Activated T-helper 2 cell treated with anti-CD3 and anti-CD28 coated beads, Interferon-gamma antibody, Interleukin-2, Interleukin-4, amounts not matched to agents 10 μg/mL and 5 μg/mL and 100 μg/mL, durations not matched to agents 14 hours and 24 hours and 36 hours (primary cell): ENCODE measurements at regions of chr1 and their contacts with region 1.

Region 1: GRCh38 chr1:109739738-109740660 is 839 bp downstream of the GSTM3 start:
- DNase-seq: peak; percentile 79
- H3K4me3 Mint-ChIP-seq: peak overlapping the region; percentile 79
- H3K27ac Mint-ChIP-seq: peak overlapping the region; percentile 46
- H3K4me1 Mint-ChIP-seq: peaks cover 8% of the 10 kb centered on the region
- H3K27me3 Mint-ChIP-seq: peaks cover 19% of the 10 kb centered on the region

Region 2: DNA sequence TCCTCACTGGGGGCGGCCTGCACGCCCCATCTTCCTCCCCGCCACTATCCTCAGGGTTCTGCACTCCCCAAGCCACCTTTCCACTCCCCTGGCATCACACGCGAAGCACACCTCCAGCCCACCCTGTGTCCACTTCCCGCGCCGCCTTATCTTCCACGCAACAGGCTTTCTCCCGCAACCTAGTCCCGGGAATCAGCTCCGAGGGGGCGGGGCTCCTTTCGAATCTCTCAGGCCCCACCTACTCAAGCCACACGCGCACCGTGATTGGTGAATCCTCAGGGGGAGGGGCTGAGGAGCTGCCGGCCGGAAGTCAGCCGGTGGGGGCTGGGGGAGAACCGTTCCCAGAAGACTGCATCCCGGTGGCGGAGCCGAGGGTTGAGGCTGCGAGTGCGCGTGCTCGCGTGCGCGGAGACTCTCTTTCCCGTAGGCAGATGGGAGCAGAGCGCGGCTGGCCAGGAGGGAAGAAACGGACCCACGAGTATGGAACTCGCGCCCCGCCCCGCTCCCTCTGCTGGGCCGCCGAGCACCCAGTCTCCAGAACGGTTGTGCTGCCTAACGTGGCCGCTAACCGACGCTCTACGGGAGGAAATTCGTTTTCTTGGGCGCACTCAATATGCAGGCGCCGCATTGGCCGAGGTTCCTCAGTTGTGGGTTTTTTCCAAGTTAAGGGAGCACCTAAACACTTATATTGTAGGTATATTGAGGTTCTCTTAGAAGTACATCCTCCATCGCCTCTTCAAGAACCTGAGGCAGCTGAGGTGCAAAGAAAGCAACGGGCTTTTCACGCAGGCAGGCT is 456.8 kb before region 1 on chr1 and contains the start of gene PSRC1:
- intact Hi-C with region 1: no loop called
- DNase-seq: peak; percentile 87
- H3K4me3 Mint-ChIP-seq: peak within 1 kb of the TSS; percentile 93
- H3K27ac Mint-ChIP-seq: peak within 1 kb of the TSS; percentile 79
- H3K4me1 Mint-ChIP-seq: peaks cover 21% of the 10 kb centered on the region
- H3K27me3 Mint-ChIP-seq: peaks cover 3% of the 10 kb centered on the region
- total RNA-seq, gene PSRC1: 7.8 and 9.5 TPM in 2 replicates

Region 3: GRCh38 chr1:109687616-109688499 is 52.1 kb before region 1 on chr1 and contains the start of gene GSTM1:
- intact Hi-C with region 1: loop called (anchors 2 kb)
- DNase-seq: peak; percentile 85
- H3K4me3 Mint-ChIP-seq: peak within 1 kb of the TSS; percentile 86
- H3K27ac Mint-ChIP-seq: peak within 1 kb of the TSS; percentile 94
- H3K4me1 Mint-ChIP-seq: peaks cover 11% of the 10 kb centered on the region
- H3K27me3 Mint-ChIP-seq: no peaks in the 10 kb centered on the region
- total RNA-seq, gene GSTM1: 112 and 113 TPM in 2 replicates

Region 4: DNA sequence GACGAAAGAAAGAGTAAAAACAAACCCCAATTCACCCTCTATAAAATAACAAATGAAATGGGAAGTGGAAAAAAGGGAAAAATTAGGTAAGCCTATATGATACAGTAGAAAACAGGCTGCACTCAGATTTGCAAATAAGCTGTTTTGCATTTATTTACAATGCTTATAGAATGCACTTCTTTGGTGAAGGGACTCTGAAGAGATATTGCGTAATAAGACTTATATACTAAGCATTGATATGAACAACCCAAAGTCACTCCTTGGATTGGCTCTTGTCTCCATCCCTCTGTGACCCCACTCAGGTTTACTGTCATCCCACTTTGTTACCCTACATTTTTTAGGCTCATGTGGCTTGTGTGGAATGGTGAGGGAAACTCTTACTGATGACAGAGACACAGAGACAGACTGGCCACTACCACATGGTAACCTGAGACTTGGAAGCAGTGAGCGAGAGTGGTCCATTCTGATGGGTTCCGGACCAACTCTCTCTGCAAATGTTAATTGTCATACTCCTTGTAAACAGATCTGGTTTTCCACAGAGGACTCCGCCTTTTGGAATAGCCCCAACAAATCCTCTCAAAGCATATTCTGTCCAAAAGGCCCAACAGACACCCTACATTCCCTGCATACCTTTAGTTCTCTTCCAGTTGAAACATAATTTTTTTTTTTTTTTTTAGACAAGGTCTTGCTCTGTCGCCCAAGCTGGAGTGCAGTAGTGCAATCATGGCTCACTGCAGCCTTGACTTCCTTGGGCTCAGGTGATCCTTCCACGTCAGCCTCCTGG is 16.9 kb before region 1 on chr1:
- intact Hi-C with region 1: no loop called
- DNase-seq: no peak
- H3K4me3 Mint-ChIP-seq: no peak overlapping the region
- H3K27ac Mint-ChIP-seq: no peak overlapping the region
- H3K4me1 Mint-ChIP-seq: peaks cover 6% of the 10 kb centered on the region
- H3K27me3 Mint-ChIP-seq: peaks cover 19% of the 10 kb centered on the region